ENCODE measurements at regions of chr3 and their contacts with region 1.

Region 1: DNA sequence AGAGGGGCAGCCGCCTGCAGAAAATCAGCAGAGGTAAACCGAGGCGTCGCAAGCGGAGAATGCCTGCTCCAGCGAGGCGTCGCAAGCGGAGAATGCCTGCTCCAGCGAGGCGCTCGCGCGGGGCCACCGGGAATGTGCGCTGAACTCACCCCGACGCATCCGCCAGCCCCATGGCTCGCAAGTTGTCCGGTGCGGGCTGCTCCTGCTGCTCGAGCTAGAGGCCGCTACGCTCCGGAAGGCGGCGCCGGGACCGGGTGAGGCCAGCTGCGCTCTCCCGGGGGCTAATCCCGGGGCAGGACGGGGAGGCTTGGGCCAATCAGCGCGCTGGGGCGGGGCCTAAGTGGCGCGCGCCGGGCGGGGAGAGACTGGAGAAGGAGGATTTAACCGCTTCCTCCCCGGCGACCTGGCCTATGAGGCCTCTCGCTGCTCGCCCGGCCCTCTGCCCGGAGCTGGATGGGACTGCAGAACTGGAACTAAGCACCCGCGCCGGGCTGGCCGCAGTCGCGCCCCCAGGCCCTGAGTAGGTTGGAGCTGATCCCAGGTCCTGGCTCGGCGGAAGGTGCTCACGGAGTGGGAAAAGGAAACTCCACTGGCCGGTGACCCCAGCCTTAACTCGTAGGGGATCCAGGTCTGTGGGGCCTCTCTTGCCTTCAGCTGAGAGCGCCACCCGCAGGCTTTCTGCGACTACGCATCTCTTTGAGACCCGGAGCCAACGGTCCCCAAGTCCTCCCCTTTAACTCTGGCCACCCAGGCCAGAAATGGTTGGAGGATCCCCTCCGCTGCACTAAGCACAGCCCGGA is at the start of gene SLC26A6:
- DNase-seq: peak; percentile 56
- H3K4me3 ChIP-seq: peak within 1 kb of the TSS; percentile 84
- CTCF ChIP-seq: peak; percentile 67

Region 2: GRCh38 chr3:48556793-48557626 is 78.4 kb before region 1 on chr3 and contains the start of gene PFKFB4:
- CTCF ChIA-PET with region 1: interaction called, 88 read pairs
- POLR2A ChIA-PET with region 1: interaction called, 10 read pairs
- DNase-seq: peak; percentile 93
- H3K4me3 ChIP-seq: peak within 1 kb of the TSS; percentile 86
- CTCF ChIP-seq: peak; percentile 1

Region 3: DNA sequence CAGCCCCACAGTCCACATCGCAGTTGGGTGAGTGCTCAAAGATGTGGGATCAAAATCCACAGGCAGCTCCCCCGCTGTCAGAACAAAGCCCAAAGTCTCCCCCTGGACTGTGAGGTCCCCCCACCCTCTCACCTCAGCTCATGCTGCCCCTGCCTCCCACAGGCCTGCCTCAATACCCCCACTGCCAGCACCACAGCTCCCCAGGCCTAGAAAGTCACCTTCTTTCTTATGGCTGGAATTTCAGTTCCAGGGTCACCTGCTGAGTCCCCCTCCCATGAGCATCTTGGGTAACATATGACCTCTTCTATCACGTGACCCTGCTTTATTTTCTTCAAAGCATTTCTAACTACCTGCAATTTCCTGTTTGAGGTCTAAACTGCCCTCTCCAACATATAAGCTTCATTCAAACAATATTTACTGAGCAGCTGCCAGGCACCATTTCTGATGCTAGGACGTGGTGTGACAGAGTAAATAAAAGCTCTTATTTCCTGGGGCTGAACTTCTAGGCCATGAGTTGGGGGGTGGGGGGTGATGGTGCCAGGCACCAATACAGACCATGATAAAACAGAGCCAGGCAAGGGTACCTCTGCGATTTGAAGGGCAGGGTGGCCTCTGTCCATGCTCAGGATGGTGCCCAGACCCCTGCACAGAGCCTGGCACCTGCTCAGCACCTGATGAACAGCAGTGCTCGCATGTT is 11.4 kb before region 1 on chr3:
- CTCF ChIA-PET with region 1: interaction called, 45 read pairs
- POLR2A ChIA-PET with region 1: interaction called, 5 read pairs
- DNase-seq: no peak
- H3K4me3 ChIP-seq: no peak overlapping the region
- CTCF ChIP-seq: no peak

Region 4: GRCh38 chr3:48663415-48664312 is 28.2 kb after region 1 on chr3:
- CTCF ChIA-PET with region 1: interaction called, 31 read pairs
- POLR2A ChIA-PET with region 1: interaction called, 25 read pairs
- DNase-seq: peak; percentile 92
- H3K4me3 ChIP-seq: peak overlapping the region; percentile 70
- CTCF ChIP-seq: peak; percentile 80

Region 5: DNA sequence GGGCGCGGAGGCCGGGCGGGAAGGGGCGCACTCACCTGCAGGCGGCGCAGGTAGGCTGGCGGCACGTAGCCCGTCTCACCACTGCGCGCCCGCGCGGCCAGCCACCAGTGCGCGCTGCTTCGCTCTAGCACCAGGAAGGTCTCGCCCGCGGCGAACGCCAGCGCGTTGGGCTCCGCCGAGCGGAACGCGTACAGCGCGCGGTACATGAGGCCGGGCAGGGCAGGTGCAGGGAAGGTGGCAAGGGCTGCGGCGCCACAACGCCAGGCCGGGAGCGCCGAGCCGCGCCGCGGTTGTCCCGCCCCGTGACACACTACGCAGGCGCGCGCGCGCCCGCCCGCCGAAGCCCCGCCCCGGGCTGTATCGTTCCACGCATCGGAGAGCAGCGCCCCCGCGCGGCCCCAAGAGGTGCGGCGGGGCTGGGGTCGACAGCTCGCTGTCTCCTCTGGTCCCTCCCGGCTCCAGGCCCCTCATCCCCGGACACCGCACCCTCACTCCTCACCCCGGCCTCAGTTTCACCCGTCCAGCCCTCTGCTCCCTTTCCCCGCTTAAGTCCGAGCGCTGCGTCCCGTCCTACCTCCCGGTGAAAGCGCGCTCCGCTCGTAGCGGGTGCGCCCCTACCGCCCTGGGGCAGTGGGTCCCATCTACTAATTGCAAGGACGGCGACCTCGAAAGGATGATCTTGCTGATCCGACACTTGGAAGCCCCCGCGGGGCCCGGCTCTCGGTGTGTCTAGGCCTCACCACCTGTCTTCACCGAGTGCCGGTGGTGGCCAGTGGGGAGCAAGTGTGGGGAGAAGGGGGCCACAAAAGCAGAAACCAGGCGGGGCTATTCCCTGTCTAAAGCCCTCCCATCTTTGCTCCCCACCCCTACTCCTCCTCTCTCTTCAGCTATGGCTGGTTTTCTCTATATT is 50.4 kb after region 1 on chr3 and contains the start of gene NCKIPSD:
- CTCF ChIA-PET with region 1: interaction called, 12 read pairs
- POLR2A ChIA-PET with region 1: no interaction called
- DNase-seq: no peak
- H3K4me3 ChIP-seq: peak within 1 kb of the TSS; percentile 95
- CTCF ChIP-seq: peak; percentile 84